ENCODE measurements at regions of chr16 and their contacts with region 1.

Region 1: GRCh38 chr16:22321339-22322001 is 24.3 kb downstream of the POLR3E start:
- DNase-seq: peak; percentile 81
- H3K4me3 ChIP-seq: no peak overlapping the region
- H3K27ac ChIP-seq: no peak overlapping the region
- H3K4me1 ChIP-seq: no peaks in the 10 kb centered on the region
- H3K27me3 ChIP-seq: no peaks in the 10 kb centered on the region

Region 2: DNA sequence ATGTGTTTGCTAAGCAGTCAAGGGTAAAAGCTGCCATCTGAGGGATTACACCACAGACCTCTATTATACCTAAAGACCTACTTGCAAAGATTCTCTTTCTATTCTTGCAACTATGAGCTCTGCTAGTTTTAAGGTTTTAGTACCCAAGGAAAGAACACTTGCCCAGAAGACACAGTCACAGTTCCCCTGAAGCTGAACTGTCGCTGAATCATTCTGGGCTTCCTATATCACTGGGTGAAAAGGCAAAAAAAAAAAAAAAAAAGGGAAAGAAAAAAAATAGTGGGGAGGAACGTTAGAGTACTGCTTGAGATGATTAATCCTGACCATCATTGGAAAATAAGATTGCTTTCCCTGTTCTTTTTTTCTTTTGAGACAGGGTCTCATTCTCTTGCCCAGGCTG is 1383.0 kb before region 1 on chr16:
- in situ Hi-C with region 1: no loop called
- DNase-seq: peak; percentile 82
- H3K4me3 ChIP-seq: no peak overlapping the region
- H3K27ac ChIP-seq: peak overlapping the region; percentile 17; the same call in 1 of the 2 replicates
- H3K4me1 ChIP-seq: peaks cover 13% of the 10 kb centered on the region
- H3K27me3 ChIP-seq: no peaks in the 10 kb centered on the region

Region 3: DNA sequence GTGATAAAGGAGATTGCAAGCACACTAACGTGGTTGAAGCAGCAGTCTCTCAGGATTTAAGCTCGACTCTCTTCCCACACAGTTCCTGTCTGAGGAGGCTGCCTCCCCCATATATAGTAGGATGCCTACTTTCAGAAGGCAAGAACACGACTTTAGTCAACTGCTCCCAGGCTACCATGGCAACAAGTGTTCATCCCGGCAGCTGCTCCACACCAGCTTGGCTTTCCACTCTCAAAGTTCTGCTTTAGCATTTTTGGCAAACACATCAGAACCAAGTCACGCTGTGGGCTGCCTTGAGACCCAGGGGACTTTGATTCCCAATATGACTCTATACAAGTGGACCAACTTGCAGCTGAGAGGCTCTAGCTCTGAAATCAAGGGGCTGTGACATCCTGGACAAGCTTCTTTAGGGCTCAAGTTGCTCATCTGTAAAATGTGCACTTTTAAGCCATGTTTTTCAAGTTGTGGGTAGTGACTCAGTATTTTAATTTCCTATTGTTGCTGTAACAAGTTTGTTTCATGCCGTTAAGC is 1126.6 kb before region 1 on chr16:
- in situ Hi-C with region 1: loop called (anchors 25 kb)
- DNase-seq: peak; percentile 53
- H3K4me3 ChIP-seq: no peak overlapping the region
- H3K27ac ChIP-seq: no peak overlapping the region
- H3K4me1 ChIP-seq: peaks cover 9% of the 10 kb centered on the region; the same call in 1 of the 2 replicates
- H3K27me3 ChIP-seq: peaks cover 21% of the 10 kb centered on the region

Region 4: DNA sequence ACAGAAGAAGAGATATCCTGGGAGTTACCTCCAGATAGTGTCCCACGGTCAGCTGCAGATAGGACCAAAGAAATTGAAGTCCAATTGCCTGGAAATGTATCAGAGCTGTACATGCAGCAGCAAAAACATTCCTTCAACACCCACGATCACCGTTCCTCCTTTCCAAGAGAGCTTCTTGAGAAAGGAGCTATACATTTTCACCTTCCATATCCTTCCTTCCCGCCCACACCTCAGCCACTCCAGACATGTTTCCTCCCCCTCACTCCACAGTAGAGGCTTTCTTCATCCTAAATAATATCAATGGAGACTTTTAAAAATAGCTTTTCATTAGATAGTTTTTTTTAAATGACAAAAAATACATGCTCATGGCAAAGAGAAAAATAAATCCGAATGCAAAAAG is 580.1 kb after region 1 on chr16:
- in situ Hi-C with region 1: no loop called
- DNase-seq: no peak
- H3K4me3 ChIP-seq: no peak overlapping the region
- H3K27ac ChIP-seq: no peak overlapping the region
- H3K4me1 ChIP-seq: no peaks in the 10 kb centered on the region
- H3K27me3 ChIP-seq: no peaks in the 10 kb centered on the region

Measured in GM23248 (cell line).